Right ventricle myocardium superior (tissue), 1 donor: ENCODE measurements at regions of chr1 and their contacts with region 1.

Region 1: DNA sequence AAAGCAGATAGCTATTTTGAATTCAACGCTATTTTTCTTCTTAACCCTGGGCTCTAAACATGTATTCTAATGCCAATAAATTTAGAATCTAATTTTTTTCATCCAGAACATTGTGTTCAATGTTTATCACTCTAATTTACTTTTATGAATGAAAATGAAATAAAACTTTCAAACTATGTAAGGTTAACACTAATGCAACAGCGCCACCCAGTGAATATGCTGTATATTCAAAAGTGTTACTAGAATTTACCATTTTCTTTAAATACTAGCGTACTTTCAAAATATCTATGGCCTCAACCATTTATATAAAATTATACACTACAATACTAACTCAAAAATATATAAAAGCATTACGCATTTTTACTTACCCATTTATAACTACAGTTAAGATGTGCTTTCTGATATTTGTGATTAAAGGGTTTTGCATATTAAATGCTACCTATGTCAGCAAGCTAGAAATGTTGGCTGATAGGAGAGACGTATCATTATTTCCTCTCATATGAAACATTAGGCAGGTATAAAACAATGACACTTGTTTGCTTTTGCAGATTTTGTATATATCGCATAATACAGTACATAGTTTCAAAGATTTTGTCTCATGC is 5.9 kb upstream of the NUF2 start:
- DNase-seq: no peak
- ATAC-seq: no peak

Region 2: GRCh38 chr1:163071405-163072255 is 244.2 kb before region 1 on chr1:
- intact Hi-C with region 1: loop called (anchors 5 kb)
- DNase-seq: peak; percentile 53
- ATAC-seq: peak; percentile 70